ENCODE measurements at regions of chr21 and their contacts with region 1.

Region 1: DNA sequence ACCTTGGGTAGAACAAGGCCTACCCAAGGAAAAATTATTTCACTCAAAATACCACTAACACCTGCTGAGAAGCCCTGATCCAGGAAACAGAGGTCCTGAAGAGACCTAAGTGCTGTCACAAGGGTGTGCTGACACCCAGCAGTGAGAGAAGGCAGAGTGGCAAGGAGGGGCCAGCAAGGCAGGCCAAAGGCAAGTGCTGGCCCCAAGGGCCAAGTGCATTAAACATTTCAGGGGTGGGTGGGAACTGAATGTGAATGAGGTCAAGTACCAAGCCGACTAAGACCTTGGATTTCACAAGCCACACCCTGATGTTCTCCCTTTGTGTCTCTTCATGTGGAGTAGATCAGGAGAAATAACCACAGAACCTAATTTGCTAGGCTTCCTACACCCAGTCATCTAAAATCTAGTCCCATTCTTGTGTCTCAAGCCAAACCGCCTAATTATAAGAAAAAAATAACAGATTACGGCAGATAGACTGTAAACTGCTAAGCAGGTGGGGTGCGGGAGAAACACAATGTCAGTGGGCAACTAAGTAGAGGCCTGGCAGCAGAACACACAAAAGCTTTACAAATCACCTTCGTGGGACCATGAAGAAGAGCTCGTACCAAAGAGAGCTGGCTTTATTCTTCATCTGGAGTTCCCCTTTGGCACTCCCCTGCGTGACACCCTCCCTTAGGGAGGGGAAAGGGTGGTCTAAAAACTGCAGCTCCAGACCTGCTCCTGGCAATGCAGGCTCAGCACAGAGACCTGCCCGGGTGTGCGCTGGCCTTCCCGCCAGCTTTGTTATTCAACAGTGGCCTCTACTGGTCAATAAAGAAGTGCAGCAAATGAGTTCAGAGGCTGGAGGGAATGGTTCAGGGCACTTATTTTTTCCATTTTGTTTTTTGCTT is 8.7 kb downstream of the UBE2G2 start:
- DNase-seq: peak; percentile 58
- ATAC-seq: peak; percentile 98
- H3K4me3 ChIP-seq: no peak overlapping the region
- H3K27ac ChIP-seq: no peak overlapping the region
- H3K4me1 ChIP-seq: peaks cover 3% of the 10 kb centered on the region; the same call in 1 of the 2 replicates
- H3K27me3 ChIP-seq: no peaks in the 10 kb centered on the region
- CTCF ChIP-seq: peak; percentile 73
- POLR2A ChIP-seq: no peak
- RAD21 ChIP-seq: peak; percentile 73

Region 2: DNA sequence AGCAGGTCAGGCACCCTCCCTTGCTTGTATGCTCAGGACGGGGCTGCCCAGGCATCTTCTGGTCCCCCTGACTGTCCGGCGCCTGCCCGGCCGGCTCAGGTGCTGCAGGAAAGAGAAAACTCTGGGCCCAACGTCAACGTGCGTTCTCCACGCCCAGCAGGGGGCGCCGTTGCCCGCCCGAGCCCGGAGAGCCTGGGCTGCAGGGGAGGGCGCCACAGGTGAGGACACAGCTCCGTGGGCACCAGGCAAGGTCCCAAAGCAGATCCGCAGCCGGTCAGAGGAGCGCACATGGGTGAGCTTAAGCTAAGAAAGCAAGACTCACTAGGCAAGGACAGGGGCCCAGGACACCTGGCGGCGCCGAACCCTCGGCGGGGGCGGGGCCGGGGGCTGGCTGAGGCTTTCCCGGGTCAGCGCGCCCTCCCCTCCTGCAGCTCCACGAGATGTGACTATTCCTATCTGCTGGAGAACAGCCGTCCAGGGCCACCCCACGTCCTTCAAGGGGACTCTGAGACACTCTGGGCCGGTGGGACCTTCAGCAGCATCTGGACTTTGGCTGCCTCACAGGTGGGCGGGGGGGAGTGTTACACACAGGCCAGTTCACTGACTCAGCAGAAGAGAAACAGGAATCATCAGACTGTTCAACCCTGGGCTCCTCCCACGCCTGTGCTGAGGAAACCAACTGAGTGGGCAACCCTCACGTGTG is 282.3 kb before region 1 on chr21:
- CTCF ChIA-PET with region 1: no interaction called
- POLR2A ChIA-PET with region 1: no interaction called
- dilution Hi-C with region 1: no loop called
- in situ Hi-C with region 1: no loop called
- intact Hi-C with region 1: loop called (anchors 1 kb)
- DNase-seq: no peak
- ATAC-seq: peak; percentile 77
- H3K4me3 ChIP-seq: no peak overlapping the region
- H3K27ac ChIP-seq: no peak overlapping the region
- H3K4me1 ChIP-seq: no peaks in the 10 kb centered on the region
- H3K27me3 ChIP-seq: peaks cover 21% of the 10 kb centered on the region
- CTCF ChIP-seq: peak; percentile 52
- POLR2A ChIP-seq: no peak
- RAD21 ChIP-seq: peak; percentile 52

Region 3: DNA sequence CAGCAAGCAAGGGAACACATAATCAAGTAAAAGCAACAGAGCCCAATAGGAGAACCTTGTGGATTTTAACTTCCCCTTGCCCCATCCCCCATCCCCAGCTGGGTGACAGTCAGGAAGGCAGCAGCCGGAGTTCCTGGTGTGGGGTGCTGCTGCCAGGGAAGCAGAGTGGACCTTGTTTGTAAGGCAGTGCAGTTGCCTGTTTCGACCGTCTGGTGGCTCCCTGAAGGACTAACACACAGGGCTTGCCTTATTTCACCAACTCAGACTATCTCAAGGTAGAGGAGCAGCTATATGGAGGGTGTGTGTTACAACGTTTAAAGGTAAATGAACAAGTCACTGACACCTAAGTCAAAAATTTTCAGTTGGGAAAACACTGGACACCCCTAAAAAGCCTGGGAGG is 174.4 kb before region 1 on chr21:
- CTCF ChIA-PET with region 1: no interaction called
- POLR2A ChIA-PET with region 1: no interaction called
- dilution Hi-C with region 1: no loop called
- in situ Hi-C with region 1: no loop called
- intact Hi-C with region 1: loop called (anchors 1 kb)
- DNase-seq: peak; percentile 14
- ATAC-seq: peak; percentile 72
- H3K4me3 ChIP-seq: no peak overlapping the region
- H3K27ac ChIP-seq: no peak overlapping the region
- H3K4me1 ChIP-seq: no peaks in the 10 kb centered on the region
- H3K27me3 ChIP-seq: peaks cover 3% of the 10 kb centered on the region; the same call in 1 of the 2 replicates
- CTCF ChIP-seq: no peak
- POLR2A ChIP-seq: no peak
- RAD21 ChIP-seq: no peak

Measured in IMR-90 (cell line).